CD4-positive, alpha-beta T cell (primary cell): ENCODE measurements at regions of chr17 and their contacts with region 1.

Region 1: GRCh38 chr17:42609182-42609813 is at the starts of genes RETREG3 and TUBG1:
- DNase-seq: peak; percentile 97 to 100 (median 99)
- ATAC-seq: peak; percentile 90
- H3K4me3 ChIP-seq: peak within 1 kb of the TSS; percentile 100
- H3K4me3 Mint-ChIP-seq: peak within 1 kb of the TSS; percentile 100
- H3K27ac ChIP-seq: peak within 1 kb of the TSS; percentile 92 to 96
- H3K27ac Mint-ChIP-seq: peak within 1 kb of the TSS; percentile 97
- H3K4me1 ChIP-seq: peaks cover 40% of the 10 kb centered on the region
- H3K4me1 Mint-ChIP-seq: peaks cover 51% of the 10 kb centered on the region
- H3K27me3 ChIP-seq: no peaks in the 10 kb centered on the region
- H3K27me3 Mint-ChIP-seq: no peaks in the 10 kb centered on the region
- CTCF ChIP-seq: no peak
- total RNA-seq, gene RETREG3: 46.7 to 48.7 TPM
- total RNA-seq, gene TUBG1: 7.3 to 8.5 TPM

Region 2: DNA sequence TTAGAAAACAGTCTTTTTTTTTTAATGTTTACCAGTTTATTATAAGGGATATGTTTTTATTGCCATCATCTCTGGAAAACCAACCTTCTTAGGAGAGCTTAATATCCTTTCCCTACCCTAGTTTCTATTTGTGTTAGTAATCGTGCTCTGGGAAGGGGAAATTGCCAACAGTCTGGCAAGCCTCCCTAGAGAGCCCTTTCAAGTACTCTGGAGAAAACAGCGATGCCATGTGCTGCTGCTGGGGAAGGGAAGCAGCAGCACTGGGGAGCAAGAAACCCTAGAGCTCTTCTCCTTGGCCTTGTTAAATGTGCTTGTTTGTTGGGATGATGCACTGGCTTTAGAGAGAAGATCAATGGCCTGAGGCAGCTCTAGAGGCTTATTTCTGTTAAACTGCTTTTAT is 10.4 kb before region 1 on chr17:
- CTCF ChIA-PET with region 1: no interaction called
- POLR2A ChIA-PET with region 1: interaction called, 10 read pairs
- intact Hi-C with region 1: no loop called
- DNase-seq: no peak
- ATAC-seq: no peak
- H3K4me3 ChIP-seq: no peak overlapping the region
- H3K4me3 Mint-ChIP-seq: no peak overlapping the region
- H3K27ac ChIP-seq: no peak overlapping the region
- H3K27ac Mint-ChIP-seq: peak overlapping the region; percentile 9
- H3K4me1 ChIP-seq: peaks cover 29% of the 10 kb centered on the region
- H3K4me1 Mint-ChIP-seq: peaks cover 41% of the 10 kb centered on the region
- H3K27me3 ChIP-seq: no peaks in the 10 kb centered on the region
- H3K27me3 Mint-ChIP-seq: no peaks in the 10 kb centered on the region
- CTCF ChIP-seq: no peak

Region 3: DNA sequence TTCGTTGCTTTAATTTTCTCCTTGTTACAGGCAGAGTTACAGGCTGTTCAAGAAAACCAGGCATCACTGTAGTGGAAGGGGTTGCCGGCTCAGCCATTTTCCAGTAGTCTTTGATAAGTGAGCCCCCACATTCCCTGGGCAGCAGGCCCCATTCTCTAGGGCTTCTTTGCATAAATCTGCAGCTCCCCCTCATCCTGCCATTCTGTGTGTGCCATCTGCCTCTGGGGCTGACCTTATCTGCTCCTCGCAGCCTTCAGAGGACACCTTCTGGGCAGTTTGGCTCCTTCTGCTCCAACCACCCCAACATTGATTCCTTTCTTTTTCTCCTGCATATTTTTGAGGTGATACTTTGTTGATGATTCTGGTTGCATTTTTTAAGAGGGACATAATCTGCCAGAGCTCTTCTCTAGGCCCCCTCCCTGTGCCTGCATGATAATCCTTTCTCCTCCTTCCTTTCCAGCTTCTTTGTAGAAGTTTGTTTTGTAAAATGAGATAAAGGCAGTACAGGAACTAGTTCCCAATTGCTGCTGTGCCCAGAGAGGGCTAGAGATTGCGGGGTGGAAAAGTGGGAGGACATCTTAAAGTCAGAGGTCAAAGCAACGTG is 432.8 kb after region 1 on chr17:
- CTCF ChIA-PET with region 1: no interaction called
- POLR2A ChIA-PET with region 1: no interaction called
- intact Hi-C with region 1: no loop called
- DNase-seq: no peak
- ATAC-seq: no peak
- H3K4me3 ChIP-seq: no peak overlapping the region
- H3K4me3 Mint-ChIP-seq: no peak overlapping the region
- H3K27ac ChIP-seq: no peak overlapping the region
- H3K27ac Mint-ChIP-seq: no peak overlapping the region
- H3K4me1 ChIP-seq: no peaks in the 10 kb centered on the region
- H3K4me1 Mint-ChIP-seq: no peaks in the 10 kb centered on the region
- H3K27me3 ChIP-seq: no peaks in the 10 kb centered on the region
- H3K27me3 Mint-ChIP-seq: no peaks in the 10 kb centered on the region
- CTCF ChIP-seq: no peak